Activated CD4-positive, alpha-beta T cell treated with anti-CD3 and anti-CD28 coated beads for 36 hours (primary cell): ENCODE measurements at regions of chr3 and their contacts with region 1.

Region 1: DNA sequence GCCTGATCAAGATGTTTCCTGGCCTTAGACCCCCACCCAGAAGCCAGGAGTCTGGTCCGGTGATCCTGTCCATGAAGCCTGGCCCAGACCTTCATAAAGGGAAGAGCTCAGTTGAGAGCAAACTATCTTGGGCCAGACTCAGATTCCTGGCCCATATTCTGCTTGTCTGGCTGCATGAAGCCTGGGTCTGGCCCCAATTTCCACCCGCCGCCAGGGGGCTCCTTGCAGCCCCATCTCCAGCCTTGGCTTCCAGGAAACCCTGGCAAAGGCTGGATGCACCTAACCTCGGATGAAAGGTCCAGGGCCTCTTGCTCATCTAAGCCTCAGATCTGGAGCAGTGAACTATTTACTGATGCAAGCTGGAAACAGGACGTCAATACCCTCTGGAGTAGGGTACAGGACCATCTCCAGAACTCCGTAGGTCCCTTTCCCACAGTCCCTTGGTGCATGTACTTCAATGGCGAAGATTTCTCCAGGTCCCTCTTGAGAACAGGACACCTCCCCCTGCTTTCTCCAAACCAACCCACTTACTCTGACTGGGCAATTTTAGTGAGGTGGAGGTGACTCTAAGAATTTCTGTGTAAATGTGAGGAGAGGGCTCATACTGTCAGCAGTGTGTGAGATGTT is 5.6 kb downstream of the FOXL2 start:
- DNase-seq: peak; percentile 67
- ATAC-seq: no peak
- H3K4me3 Mint-ChIP-seq: no peak overlapping the region
- H3K27ac Mint-ChIP-seq: no peak overlapping the region
- H3K4me1 Mint-ChIP-seq: peaks cover 39% of the 10 kb centered on the region
- H3K27me3 Mint-ChIP-seq: peaks cover 77% of the 10 kb centered on the region

Region 2: GRCh38 chr3:137768361-137769321 is 1172.7 kb before region 1 on chr3:
- CTCF ChIA-PET with region 1: no interaction called
- POLR2A ChIA-PET with region 1: no interaction called
- intact Hi-C with region 1: loop called (anchors 5 kb)
- DNase-seq: peak; percentile 30
- ATAC-seq: no peak
- H3K4me3 Mint-ChIP-seq: no peak overlapping the region
- H3K27ac Mint-ChIP-seq: no peak overlapping the region
- H3K4me1 Mint-ChIP-seq: peaks cover 18% of the 10 kb centered on the region
- H3K27me3 Mint-ChIP-seq: peaks cover 71% of the 10 kb centered on the region

Region 3: DNA sequence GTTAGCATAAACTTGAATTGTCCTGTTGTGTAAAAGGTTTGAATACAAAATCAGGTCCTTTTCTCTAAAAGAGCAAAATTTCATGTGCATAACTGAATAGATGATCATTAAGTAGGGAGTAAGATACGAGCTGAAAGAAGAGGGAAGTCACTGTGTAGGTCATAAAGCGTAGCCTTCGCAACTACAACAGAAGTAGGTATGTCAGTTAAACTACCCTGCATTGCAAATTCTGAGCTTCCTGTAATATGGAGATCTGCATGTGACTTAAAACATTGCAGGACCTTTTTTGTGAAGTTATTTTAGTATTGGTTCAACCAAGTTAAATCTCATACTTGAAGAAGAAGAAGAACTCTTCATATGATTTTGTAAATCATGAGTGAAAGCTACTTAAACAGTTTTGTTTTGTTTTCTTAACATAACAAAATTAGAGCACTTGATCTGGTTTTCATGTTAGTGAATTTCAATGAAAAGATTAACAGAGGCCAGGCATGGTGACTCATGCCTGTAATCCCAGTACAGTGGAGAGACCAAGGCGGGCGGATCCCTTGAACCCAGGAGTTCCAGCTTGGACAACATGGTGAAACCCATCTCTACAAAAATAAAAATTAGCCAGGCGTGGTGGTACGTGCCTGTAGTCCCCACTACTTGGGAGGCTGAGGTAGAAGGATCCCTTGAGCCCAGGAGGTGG is 727.8 kb before region 1 on chr3:
- CTCF ChIA-PET with region 1: no interaction called
- POLR2A ChIA-PET with region 1: no interaction called
- intact Hi-C with region 1: no loop called
- DNase-seq: no peak
- ATAC-seq: no peak
- H3K4me3 Mint-ChIP-seq: no peak overlapping the region
- H3K27ac Mint-ChIP-seq: no peak overlapping the region
- H3K4me1 Mint-ChIP-seq: peaks cover 6% of the 10 kb centered on the region
- H3K27me3 Mint-ChIP-seq: no peaks in the 10 kb centered on the region

Region 4: DNA sequence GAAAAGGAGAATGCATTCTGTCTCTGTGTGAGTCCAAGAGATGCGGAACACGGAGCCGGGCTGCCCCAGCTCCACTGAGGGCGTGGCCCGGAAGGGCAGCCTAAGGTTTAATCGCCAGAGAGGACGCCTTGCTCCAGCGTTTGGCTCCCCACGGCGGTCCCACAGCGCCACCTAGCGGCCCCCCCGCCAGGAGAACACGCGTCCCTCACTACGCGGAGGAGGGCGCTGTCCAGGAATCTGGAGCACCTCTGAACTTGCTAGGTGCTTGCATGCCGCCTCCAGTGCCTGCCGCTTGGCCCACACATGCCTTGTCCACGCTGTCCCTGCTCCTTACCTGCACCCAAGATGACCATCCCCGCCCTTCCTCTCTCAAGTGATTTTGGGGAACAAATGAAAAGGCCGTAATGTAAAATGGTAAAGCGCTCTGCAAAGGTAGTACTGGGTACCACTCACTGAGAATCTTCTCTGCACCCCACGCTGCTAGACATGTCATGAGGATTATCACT is 388.0 kb after region 1 on chr3:
- CTCF ChIA-PET with region 1: interaction called, 7 read pairs
- POLR2A ChIA-PET with region 1: no interaction called
- intact Hi-C with region 1: loop called (anchors 1 to 2 kb)
- DNase-seq: peak; percentile 95
- ATAC-seq: peak; percentile 98
- H3K4me3 Mint-ChIP-seq: peak overlapping the region; percentile 25
- H3K27ac Mint-ChIP-seq: no peak overlapping the region
- H3K4me1 Mint-ChIP-seq: peaks cover 7% of the 10 kb centered on the region
- H3K27me3 Mint-ChIP-seq: peaks cover 19% of the 10 kb centered on the region